ENCODE measurements at regions of chr2 and their contacts with region 1.

Region 1: GRCh38 chr2:159140070-159140769 is 146.3 kb downstream of the WDSUB1 start:
- DNase-seq: peak; percentile 63
- H3K4me3 ChIP-seq: no peak overlapping the region
- H3K27ac ChIP-seq: no peak overlapping the region
- H3K4me1 ChIP-seq: peaks cover 12% of the 10 kb centered on the region
- H3K27me3 ChIP-seq: no peaks in the 10 kb centered on the region
- CTCF ChIP-seq: no peak

Region 2: GRCh38 chr2:159177957-159178356 is 37.7 kb after region 1 on chr2:
- CTCF ChIA-PET with region 1: no interaction called
- POLR2A ChIA-PET with region 1: interaction called, 14 read pairs
- intact Hi-C with region 1: no loop called
- DNase-seq: no peak
- H3K4me3 ChIP-seq: no peak overlapping the region
- H3K27ac ChIP-seq: no peak overlapping the region
- H3K4me1 ChIP-seq: no peaks in the 10 kb centered on the region
- H3K27me3 ChIP-seq: no peaks in the 10 kb centered on the region
- CTCF ChIP-seq: no peak

Region 3: GRCh38 chr2:159275111-159275510 is 134.9 kb after region 1 on chr2:
- CTCF ChIA-PET with region 1: no interaction called
- POLR2A ChIA-PET with region 1: no interaction called
- intact Hi-C with region 1: no loop called
- DNase-seq: no peak
- H3K4me3 ChIP-seq: no peak overlapping the region
- H3K27ac ChIP-seq: no peak overlapping the region
- H3K4me1 ChIP-seq: no peaks in the 10 kb centered on the region
- H3K27me3 ChIP-seq: no peaks in the 10 kb centered on the region
- CTCF ChIP-seq: no peak

Region 4: DNA sequence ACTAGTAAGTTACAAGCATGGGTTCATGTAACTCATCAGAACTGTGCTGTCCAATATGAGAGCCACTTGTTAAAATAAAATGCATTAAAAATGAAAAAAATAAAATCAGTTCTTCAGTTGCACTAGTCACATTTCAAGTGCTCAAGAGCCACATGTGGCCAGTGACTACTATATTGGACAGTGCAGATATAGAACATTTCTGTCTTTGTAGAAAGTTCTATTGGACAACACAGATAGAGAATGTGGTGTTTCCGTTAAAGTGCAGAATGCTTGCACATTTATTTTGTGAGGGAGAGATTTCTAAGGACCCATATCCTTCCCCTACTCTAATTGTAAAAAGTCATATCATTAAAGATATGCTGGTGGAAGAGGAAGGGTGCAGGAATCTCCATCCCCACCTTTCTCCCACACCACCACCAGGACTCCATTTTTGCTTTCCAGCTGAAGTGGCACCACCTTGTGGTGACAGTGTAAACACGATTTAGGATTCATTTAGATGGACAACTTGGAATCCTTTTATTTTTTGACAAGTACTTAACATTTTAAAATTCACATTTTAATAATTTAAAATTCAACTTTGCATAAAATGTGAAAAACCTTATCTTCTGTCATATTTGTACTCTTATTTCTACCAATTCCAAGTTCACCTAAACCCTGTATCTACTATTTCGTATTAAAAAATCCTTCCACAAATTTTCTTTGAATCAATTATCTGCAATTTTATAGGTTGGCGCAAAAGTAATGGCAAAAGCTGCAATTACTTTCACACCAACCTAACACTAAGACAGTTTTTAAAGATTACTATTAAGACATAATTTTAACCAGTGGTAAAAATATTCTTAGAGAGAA is 667.2 kb after region 1 on chr2:
- CTCF ChIA-PET with region 1: no interaction called
- POLR2A ChIA-PET with region 1: no interaction called
- intact Hi-C with region 1: loop called (anchors 5 kb)
- DNase-seq: peak; percentile 72
- H3K4me3 ChIP-seq: no peak overlapping the region
- H3K27ac ChIP-seq: no peak overlapping the region
- H3K4me1 ChIP-seq: no peaks in the 10 kb centered on the region
- H3K27me3 ChIP-seq: peaks cover 14% of the 10 kb centered on the region
- CTCF ChIP-seq: peak; percentile 83

Measured in A673 (cell line).